Activated CD4-positive, alpha-beta memory T cell treated with anti-CD3 and anti-CD28 coated beads, Interleukin-2, amount 10 ng/mL, durations not matched to agents 7 days and 5 days (primary cell): ENCODE measurements at regions of chr17 and their contacts with region 1.

Region 1: GRCh38 chr17:41308251-41308917 is 725 bp downstream of the KRTAP16-1 start:
- DNase-seq: peak; percentile 84
- H3K4me3 Mint-ChIP-seq: peak overlapping the region; percentile 58
- H3K27ac Mint-ChIP-seq: peak overlapping the region; percentile 92
- H3K4me1 Mint-ChIP-seq: peaks cover 44% of the 10 kb centered on the region
- H3K27me3 Mint-ChIP-seq: peaks cover 4% of the 10 kb centered on the region

Region 2: GRCh38 chr17:41340934-41341861 is 32.8 kb after region 1 on chr17:
- CTCF ChIA-PET with region 1: no interaction called
- POLR2A ChIA-PET with region 1: interaction called, 13 read pairs
- DNase-seq: peak; percentile 70
- H3K4me3 Mint-ChIP-seq: peak overlapping the region; percentile 8
- H3K27ac Mint-ChIP-seq: peak overlapping the region; percentile 86
- H3K4me1 Mint-ChIP-seq: peaks cover 49% of the 10 kb centered on the region
- H3K27me3 Mint-ChIP-seq: peaks cover 18% of the 10 kb centered on the region

Region 3: DNA sequence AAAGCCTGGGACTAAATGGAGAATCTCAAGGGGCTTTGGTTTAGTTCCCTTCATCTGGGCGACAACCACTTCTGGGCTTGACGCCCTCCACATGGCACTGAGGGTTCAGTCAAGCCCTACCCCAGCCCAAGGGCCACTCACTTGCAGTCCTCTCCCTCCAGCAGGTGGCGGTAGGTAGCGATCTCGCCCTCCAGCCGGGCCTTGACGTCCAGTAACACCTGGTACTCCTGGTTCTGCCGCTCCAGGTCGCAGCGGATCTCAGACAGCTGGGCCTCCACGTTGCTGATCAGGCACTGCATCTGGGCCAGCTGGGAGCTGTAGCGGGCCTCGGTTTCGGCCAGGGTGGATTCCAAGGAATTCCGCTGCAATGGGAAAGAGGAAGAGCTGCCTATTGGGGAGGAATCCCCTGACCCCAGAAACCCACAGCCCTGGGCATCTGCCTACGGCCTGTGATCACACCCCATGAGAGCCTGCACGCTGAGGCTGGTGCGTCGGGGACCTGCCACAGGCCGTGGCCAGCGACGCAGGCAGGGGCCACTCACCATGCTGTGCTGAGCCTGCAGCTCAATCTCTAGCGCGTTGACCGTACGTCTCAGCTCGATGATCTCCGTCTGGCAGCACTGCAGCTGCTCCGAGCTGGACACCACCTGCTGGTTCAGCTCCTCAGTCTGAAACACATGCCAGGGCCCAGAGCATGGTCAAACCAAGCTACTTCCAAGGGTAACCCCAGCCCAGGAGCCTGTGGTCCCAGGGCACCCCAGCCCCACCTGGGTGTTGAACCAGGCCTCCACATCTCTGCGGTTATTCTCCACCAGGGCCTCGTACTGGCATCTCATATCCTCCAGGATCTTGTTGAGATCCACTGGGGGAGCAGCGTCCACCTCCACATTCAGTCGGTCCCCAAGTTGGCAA is 178.7 kb after region 1 on chr17:
- CTCF ChIA-PET with region 1: no interaction called
- POLR2A ChIA-PET with region 1: no interaction called
- DNase-seq: peak; percentile 42
- H3K4me3 Mint-ChIP-seq: no peak overlapping the region
- H3K27ac Mint-ChIP-seq: no peak overlapping the region
- H3K4me1 Mint-ChIP-seq: peaks cover 2% of the 10 kb centered on the region
- H3K27me3 Mint-ChIP-seq: peaks cover 4% of the 10 kb centered on the region